ENCODE measurements at regions of chr14 and their contacts with region 1.

Region 1: DNA sequence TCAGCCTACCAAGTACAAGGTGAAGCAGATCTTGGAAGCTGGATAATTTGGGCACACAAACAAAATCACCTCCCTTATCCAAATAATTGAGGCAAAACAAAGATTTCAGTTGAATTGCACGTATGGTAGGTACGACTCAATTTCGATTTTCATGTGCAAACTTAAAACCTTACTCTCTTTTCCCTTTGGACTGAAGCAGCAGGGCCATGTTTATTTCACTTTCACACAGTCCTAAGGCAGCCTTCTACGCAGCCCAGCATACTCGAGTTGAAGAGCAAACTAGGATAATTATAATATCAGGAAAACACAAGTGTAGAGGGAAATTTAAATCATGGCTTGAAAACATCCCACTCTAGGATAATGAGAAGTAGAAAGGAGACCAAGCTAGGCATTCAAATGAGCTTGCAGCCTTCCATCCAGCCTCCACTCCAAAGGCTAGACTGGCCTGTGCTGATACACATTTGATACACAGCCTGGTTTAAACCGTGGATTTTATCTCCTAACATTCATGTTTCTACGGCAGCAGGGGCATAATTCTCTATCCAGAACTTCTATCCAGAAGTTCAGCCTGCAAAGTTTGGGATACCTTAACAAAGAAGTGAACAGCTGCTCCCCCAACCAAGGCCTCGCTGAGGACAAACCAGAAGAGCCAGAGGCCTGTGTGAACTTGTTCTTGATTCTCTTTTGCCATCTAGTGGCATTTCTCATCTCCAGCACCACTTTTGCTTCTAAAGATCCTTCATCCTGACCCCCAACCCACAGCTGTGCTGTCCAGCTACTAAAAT is 2.4 kb upstream of the RNASE7 start:
- DNase-seq: peak in 1 of 2 experiments; percentile 53
- H3K4me3 ChIP-seq: no peak overlapping the region
- H3K27ac ChIP-seq: no peak overlapping the region
- H3K4me1 ChIP-seq: peaks cover 8 to 11% (median 10%) of the 10 kb centered on the region in 4 experiments; a peak in 6 of 7 replicates
- H3K27me3 ChIP-seq: peaks cover 0 to 3% (median 0%) of the 10 kb centered on the region in 4 experiments; a peak in 1 of 7 replicates
- CTCF ChIP-seq: peak in 2 of 3 experiments; percentile 68 to 83; a peak in 3 of 4 replicates
- EP300 ChIP-seq: no peak
- POLR2A ChIP-seq: no peak
- RAD21 ChIP-seq: peak; percentile 91

Region 2: GRCh38 chr14:20998664-20999366 is 41.0 kb before region 1 on chr14 and contains the start of gene SLC39A2:
- CTCF ChIA-PET with region 1: interaction called, 12 read pairs
- POLR2A ChIA-PET with region 1: interaction called, 3 read pairs
- DNase-seq: peak in 1 of 2 experiments; percentile 60
- H3K4me3 ChIP-seq: peak within 1 kb of the TSS in 1 of 4 experiments; percentile 9; a peak in 1 of 8 replicates
- H3K27ac ChIP-seq: no peak within 1 kb of the TSS
- H3K4me1 ChIP-seq: peaks cover 2 to 6% (median 5%) of the 10 kb centered on the region in 4 experiments; a peak in 5 of 7 replicates
- H3K27me3 ChIP-seq: no peaks in the 10 kb centered on the region
- CTCF ChIP-seq: no peak
- EP300 ChIP-seq: no peak
- POLR2A ChIP-seq: no peak
- RAD21 ChIP-seq: no peak
- total RNA-seq, gene SLC39A2: 0.22 TPM in 1 of 2 replicates, not detected in the other

Region 3: DNA sequence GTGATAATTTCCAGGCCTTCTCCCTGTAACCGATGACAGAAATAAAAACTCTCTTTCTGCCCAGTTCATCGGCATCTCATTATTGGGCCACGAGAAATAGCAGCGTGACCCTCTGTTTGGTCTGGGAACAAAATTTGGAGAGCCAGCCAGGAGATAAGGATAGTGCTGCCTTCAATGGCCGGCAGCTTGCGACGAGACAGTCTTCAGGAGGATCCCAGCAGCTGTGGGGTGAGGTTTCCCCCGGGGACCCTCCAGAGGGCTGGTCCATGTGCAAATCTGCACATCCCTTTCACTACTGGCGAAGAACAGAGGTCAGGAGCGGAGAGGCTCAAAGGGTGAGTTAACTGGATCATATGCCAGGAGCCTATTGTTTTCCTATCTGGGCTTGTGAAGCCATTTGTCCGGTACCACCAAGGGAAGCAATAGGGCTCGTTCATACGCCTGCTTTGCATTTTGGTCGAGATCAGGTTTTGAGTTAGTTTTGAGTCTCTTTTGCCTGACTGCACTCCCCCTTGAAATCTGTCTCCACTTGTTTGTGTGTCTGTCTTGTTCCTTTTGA is 35.9 kb before region 1 on chr14:
- CTCF ChIA-PET with region 1: interaction called, 12 read pairs
- POLR2A ChIA-PET with region 1: no interaction called
- DNase-seq: no peak
- H3K4me3 ChIP-seq: no peak overlapping the region
- H3K27ac ChIP-seq: no peak overlapping the region
- H3K4me1 ChIP-seq: peaks cover 1 to 3% (median 3%) of the 10 kb centered on the region in 4 experiments; a peak in 5 of 7 replicates
- H3K27me3 ChIP-seq: no peaks in the 10 kb centered on the region
- CTCF ChIP-seq: no peak
- EP300 ChIP-seq: no peak
- POLR2A ChIP-seq: no peak
- RAD21 ChIP-seq: no peak

Region 4: DNA sequence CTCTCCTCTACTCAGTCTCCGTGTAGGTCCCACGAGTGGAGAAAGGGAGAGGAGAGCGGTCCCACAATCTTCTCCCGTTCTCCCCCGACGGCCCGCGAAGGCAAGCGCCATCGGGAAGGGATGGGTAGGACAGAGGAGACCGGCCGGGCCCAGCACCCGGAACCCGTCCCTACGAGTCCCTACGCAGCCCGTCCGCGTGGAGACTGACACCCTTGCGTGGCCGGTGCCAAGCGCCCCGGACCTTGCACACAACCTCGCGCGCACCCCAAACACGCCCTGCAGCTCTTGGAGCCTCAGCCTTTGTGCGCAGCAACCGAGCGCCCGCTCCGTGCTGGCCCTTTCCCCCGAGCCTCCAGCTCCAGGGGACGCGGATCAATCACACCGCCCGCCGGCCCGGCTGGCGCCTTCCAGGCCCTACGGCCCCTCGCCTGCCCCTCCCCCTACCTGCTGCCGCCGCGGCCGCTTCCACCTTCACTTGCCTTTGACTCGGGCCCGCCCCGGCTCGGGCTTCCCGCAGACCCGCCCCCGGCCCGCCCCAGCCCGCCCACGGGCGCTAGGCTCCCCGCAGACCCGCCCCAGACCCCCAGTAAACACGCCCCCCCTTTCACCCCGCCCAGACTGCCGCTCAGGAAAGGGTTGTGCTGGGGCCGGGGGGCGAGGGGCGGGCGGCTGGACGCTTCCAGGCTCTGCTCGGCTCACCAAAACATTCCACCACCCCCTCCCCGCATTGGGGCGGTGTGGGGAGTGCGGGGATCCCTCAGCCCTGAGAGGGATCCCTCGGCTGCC is 15.0 kb before region 1 on chr14 and contains the start of gene NDRG2:
- CTCF ChIA-PET with region 1: interaction called, 371 read pairs
- POLR2A ChIA-PET with region 1: interaction called, 19 read pairs
- DNase-seq: peak in 1 of 2 experiments; percentile 91
- H3K4me3 ChIP-seq: peak within 1 kb of the TSS; percentile 64 to 92 (median 70)
- H3K27ac ChIP-seq: peak within 1 kb of the TSS; percentile 71; the same call in 1 of the 2 replicates
- H3K4me1 ChIP-seq: peaks cover 4 to 22% (median 14%) of the 10 kb centered on the region in 4 experiments; a peak in 6 of 7 replicates
- H3K27me3 ChIP-seq: peaks cover 2 to 25% (median 22%) of the 10 kb centered on the region in 4 experiments; a peak in 6 of 7 replicates
- CTCF ChIP-seq: no peak
- EP300 ChIP-seq: no peak
- POLR2A ChIP-seq: no peak
- RAD21 ChIP-seq: no peak; a peak in 1 of 4 replicates
- total RNA-seq, gene NDRG2: 27.2 and 29.9 TPM in 2 replicates

Region 5: DNA sequence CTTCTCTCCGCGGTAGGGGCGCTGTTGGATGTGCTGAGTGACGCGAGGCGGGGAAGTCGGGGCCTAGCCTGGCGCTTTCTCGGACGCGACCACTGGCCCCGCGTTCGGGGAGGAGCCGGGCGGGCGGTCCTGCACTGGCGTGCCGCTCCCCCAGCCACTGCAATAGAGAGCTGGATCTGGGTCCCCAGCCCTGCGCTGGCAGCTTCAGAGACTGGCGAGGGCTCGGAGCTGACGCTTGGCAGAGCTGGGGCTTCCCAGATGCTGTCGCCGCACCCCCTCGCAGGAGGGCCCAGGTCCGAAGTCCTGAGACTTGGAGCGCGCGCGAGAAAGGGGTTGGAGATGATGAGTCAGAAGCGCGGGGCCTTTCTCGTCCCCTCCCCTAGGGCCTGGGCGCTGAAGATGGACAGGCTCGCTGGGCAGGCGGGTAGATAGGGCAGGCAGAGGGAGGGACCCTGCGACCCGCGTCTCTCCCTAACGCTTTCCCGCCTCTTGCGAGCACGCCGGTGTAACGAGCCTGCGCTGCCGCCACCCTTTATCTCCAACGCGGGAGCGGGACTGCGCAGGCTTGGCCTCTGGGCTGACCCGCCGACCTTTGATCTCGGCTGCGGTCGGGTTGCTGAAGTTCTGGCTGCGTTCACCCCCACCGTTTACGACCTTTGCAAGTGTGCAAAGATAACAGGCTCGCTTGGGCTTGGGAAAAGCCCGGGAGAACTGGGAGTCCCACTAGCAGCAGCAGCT is 64.1 kb after region 1 on chr14:
- CTCF ChIA-PET with region 1: interaction called, 15 read pairs
- POLR2A ChIA-PET with region 1: no interaction called
- DNase-seq: peak; percentile 80 to 96
- H3K4me3 ChIP-seq: peak overlapping the region; percentile 49 to 83 (median 80)
- H3K27ac ChIP-seq: peak overlapping the region; percentile 99
- H3K4me1 ChIP-seq: peaks cover 2 to 25% (median 9%) of the 10 kb centered on the region in 4 experiments; a peak in 5 of 7 replicates
- H3K27me3 ChIP-seq: no peaks in the 10 kb centered on the region
- CTCF ChIP-seq: peak; percentile 70 to 86 (median 75)
- EP300 ChIP-seq: peak in 1 of 2 experiments; percentile 99; a peak in 2 of 3 replicates
- POLR2A ChIP-seq: peak; percentile 88 to 93
- RAD21 ChIP-seq: peak; percentile 9 to 33; a peak in 3 of 4 replicates

Region 6: DNA sequence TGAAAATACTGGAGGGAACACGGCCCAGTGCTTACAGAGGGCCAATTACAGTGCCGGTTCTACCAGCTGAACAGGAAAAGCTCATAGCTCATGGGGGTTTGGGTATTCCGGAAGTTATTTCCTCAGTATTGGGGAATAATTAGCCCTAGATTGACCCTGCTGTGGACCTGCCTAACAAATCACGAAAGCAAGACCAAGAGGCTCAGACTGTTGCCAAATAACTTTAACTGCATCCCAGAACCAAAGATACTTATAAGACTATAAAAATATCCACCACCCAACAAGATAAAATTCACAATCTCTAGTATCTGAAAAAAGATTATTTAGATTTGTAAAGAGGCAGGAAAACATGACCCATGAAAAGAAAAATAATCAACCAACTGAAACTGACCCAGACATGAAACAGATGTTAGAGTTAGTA is 124.1 kb after region 1 on chr14:
- CTCF ChIA-PET with region 1: no interaction called
- POLR2A ChIA-PET with region 1: no interaction called
- DNase-seq: no peak
- H3K4me3 ChIP-seq: no peak overlapping the region
- H3K27ac ChIP-seq: no peak overlapping the region
- H3K4me1 ChIP-seq: no peaks in the 10 kb centered on the region
- H3K27me3 ChIP-seq: no peaks in the 10 kb centered on the region
- CTCF ChIP-seq: no peak
- EP300 ChIP-seq: no peak
- POLR2A ChIP-seq: no peak
- RAD21 ChIP-seq: no peak

Measured in H1 (cell line).